ENCODE measurements at regions of chr4 and their contacts with region 1.

Region 1: GRCh38 chr4:61786211-61786610 is 586.1 kb downstream of the ADGRL3 start:
- DNase-seq: no peak
- ATAC-seq: no peak
- H3K4me3 ChIP-seq: no peak overlapping the region
- H3K27ac ChIP-seq: no peak overlapping the region
- H3K4me1 ChIP-seq: peaks cover 0 to 6% (median 0%) of the 10 kb centered on the region in 9 donors
- H3K27me3 ChIP-seq: no peaks in the 10 kb centered on the region
- CTCF ChIP-seq: no peak

Region 2: GRCh38 chr4:63361628-63362027 is 1575.4 kb after region 1 on chr4:
- intact Hi-C with region 1: loop called in 1 of 10 experiments (anchors 5 kb)
- DNase-seq: no peak
- ATAC-seq: no peak
- H3K4me3 ChIP-seq: no peak overlapping the region
- H3K27ac ChIP-seq: no peak overlapping the region
- H3K4me1 ChIP-seq: no peaks in the 10 kb centered on the region
- H3K27me3 ChIP-seq: no peaks in the 10 kb centered on the region
- CTCF ChIP-seq: no peak